ENCODE measurements at regions of chr3 and their contacts with region 1.

Region 1: DNA sequence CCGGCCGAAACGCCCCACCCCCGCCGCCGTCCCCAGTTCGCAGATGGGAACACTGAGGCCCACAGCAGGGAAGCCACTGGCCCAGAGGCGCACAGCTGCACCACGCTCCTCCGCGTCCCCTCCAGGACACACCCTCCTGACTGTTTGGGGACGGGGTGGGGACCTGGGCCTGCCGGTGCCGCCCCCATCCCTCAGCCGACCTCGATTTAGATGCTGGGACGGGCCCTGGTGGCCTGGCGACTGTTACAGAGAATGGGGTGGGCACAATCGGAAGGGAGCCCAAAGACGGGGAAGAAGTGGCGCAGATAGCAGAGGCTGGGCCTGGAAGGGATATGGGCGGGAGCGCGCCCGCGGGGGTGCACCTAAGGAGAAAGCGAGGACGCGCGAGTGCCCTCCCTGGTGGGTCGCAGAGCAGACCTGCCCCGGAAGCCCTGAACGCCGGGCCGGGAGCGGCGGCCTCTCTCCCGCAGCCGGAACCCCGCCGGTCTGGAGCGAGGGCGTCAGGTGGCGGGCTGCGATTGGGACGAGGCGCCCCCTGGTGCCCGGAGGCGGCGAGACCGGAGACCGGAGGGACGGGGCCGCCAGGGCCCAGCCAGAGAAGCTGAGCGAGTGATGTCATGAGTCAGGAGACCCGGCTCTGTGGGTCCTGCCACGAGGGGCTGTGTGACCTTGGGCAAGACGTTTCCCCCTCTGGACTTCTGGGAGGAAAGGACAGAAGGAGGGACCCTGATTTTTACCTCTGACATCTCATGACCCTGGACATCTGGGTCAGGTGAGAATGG is 78.4 kb downstream of the IQSEC1 start:
- DNase-seq: peak; percentile 78 to 91
- H3K4me3 ChIP-seq: peak overlapping the region; percentile 81 to 88 (median 88)
- H3K27ac ChIP-seq: peak overlapping the region; percentile 84 to 85
- H3K4me1 ChIP-seq: no peaks in the 10 kb centered on the region
- H3K27me3 ChIP-seq: no peaks in the 10 kb centered on the region
- CTCF ChIP-seq: peak; percentile 90 to 92 (median 90)
- POLR2A ChIP-seq: peak; percentile 56

Region 2: GRCh38 chr3:13073326-13074005 is 78.7 kb after region 1 on chr3 and contains the start of gene IQSEC1:
- intact Hi-C with region 1: no loop called
- DNase-seq: no peak
- H3K4me3 ChIP-seq: peak within 1 kb of the TSS in 2 of 3 donors; percentile 29 to 52
- H3K27ac ChIP-seq: no peak within 1 kb of the TSS
- H3K4me1 ChIP-seq: no peaks in the 10 kb centered on the region
- H3K27me3 ChIP-seq: peaks cover 6 to 39% of the 10 kb centered on the region in 2 donors
- CTCF ChIP-seq: no peak
- POLR2A ChIP-seq: no peak
- total RNA-seq, gene IQSEC1: 26.9 to 45.4 (median 26.9) TPM

Region 3: GRCh38 chr3:14358426-14359211 is 1363.8 kb after region 1 on chr3:
- intact Hi-C with region 1: loop called (anchors 10 kb)
- DNase-seq: peak; percentile 73 to 76
- H3K4me3 ChIP-seq: peak overlapping the region in 1 of 3 donors; percentile 23
- H3K27ac ChIP-seq: peak overlapping the region; percentile 40 to 59
- H3K4me1 ChIP-seq: no peaks in the 10 kb centered on the region
- H3K27me3 ChIP-seq: no peaks in the 10 kb centered on the region
- CTCF ChIP-seq: no peak
- POLR2A ChIP-seq: no peak

Measured in breast epithelium (tissue), 4 donors.